Kidney (tissue), 22 donors: ENCODE measurements at regions of chr12 and their contacts with region 1.

Region 1: DNA sequence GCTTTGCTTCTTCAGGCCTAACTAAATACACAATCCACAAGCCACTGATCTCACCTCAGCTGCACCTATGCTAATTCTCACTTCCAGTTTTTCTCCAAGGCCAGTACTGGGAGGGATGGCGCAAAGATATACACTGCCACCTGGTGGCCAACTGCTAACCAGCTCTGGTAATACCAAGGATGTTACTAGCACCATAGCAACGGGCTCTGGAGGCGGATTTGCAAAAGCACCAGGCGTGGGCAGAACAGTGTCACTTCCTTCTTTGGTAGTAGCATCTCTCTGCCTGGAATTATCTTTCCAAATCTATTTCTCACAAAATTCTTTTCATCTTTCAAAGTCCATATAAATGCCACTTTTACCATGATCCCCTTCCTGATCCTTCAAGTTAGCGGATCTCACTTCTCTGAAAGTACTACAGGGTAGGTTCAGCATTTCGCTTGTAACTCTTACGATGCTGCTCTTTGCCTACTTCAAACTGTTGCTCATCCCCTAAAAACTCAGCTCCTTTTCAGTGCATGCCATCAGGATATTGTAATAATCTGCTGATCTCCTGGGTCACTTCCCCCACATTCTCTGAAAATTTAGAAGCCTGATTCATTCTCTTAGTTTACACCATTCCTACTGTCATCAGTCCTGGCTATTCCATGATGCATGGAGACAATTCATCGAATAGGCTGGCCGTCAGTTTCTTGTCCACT is 37.1 kb upstream of the FOXJ2 start:
- DNase-seq: peak; percentile 81 to 92 (median 88)
- H3K4me3 ChIP-seq: no peak overlapping the region
- H3K27ac ChIP-seq: peak overlapping the region in 1 of 2 donors; percentile 61
- H3K4me1 ChIP-seq: no peaks in the 10 kb centered on the region
- H3K27me3 ChIP-seq: no peaks in the 10 kb centered on the region
- CTCF ChIP-seq: peak; percentile 68

Region 2: DNA sequence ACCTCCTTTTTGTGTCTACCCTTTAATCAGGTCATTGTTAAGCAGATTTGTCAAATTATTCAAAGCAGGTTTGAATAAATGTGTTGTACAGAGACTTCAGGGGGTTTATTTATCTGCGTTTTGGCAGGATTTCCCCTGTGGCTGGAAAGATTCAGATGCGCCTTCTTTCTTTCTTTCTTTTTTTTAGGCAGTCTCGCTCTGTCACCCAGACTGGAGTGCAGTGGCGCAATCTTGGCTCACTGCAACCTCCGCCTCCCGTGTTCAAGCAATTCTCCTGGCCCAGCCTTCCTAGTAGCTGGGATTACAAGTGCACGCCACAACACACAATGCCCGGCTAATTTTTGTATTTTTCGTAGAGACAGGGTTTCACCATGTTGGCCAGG is 236.7 kb before region 1 on chr12:
- intact Hi-C with region 1: no loop called
- DNase-seq: no peak
- H3K4me3 ChIP-seq: no peak overlapping the region
- H3K27ac ChIP-seq: no peak overlapping the region
- H3K4me1 ChIP-seq: no peaks in the 10 kb centered on the region
- H3K27me3 ChIP-seq: no peaks in the 10 kb centered on the region
- CTCF ChIP-seq: no peak

Region 3: GRCh38 chr12:7859552-7859951 is 135.9 kb before region 1 on chr12:
- intact Hi-C with region 1: loop called (anchors 5 kb)
- DNase-seq: no peak
- H3K4me3 ChIP-seq: no peak overlapping the region
- H3K27ac ChIP-seq: no peak overlapping the region
- H3K4me1 ChIP-seq: no peaks in the 10 kb centered on the region
- H3K27me3 ChIP-seq: no peaks in the 10 kb centered on the region
- CTCF ChIP-seq: no peak

Region 4: GRCh38 chr12:7933255-7933729 is 62.1 kb before region 1 on chr12:
- intact Hi-C with region 1: loop called (anchors 10 kb)
- DNase-seq: peak; percentile 70 to 94 (median 86)
- H3K4me3 ChIP-seq: peak overlapping the region in 2 of 3 donors; percentile 75 to 84
- H3K27ac ChIP-seq: peak overlapping the region in 1 of 2 donors; percentile 59
- H3K4me1 ChIP-seq: peaks cover 0 to 3% (median 0%) of the 10 kb centered on the region in 3 donors
- H3K27me3 ChIP-seq: no peaks in the 10 kb centered on the region
- CTCF ChIP-seq: peak; percentile 38